CD4-positive, alpha-beta T cell (primary cell): ENCODE measurements at regions of chr9 and their contacts with region 1.

Region 1: GRCh38 chr9:98118640-98119601 is at the start of gene TRIM14:
- DNase-seq: peak in 12 of 14 experiments; percentile 28 to 74 (median 46)
- ATAC-seq: peak; percentile 38
- H3K4me3 ChIP-seq: peak within 1 kb of the TSS; percentile 89
- H3K4me3 Mint-ChIP-seq: peak within 1 kb of the TSS; percentile 90
- H3K27ac ChIP-seq: peak within 1 kb of the TSS; percentile 79 to 84
- H3K27ac Mint-ChIP-seq: peak within 1 kb of the TSS; percentile 95
- H3K4me1 ChIP-seq: peaks cover 66% of the 10 kb centered on the region
- H3K4me1 Mint-ChIP-seq: peaks cover 65% of the 10 kb centered on the region
- H3K27me3 ChIP-seq: no peaks in the 10 kb centered on the region
- H3K27me3 Mint-ChIP-seq: no peaks in the 10 kb centered on the region
- CTCF ChIP-seq: no peak
- total RNA-seq, gene TRIM14: 23.5 to 23.6 TPM

Region 2: DNA sequence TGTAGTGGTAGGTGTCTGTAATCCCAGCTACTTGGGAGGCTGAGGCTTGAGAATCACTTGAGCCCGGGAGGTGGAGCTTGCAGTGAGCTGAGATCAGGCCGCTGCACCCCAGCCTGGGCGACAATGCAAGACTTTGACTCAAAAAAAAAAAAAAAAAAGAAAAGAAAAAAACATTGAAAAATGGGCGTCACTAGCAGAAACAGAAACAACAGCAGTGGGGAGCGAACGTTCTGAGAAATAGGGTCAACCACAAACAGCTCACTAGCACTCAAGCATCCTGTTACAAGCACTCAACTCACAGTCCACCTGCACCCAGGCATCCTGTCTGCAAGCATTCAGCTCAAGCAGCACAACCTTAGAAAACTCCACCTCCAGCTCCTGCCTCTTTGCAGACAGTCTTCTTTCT is 17.1 kb before region 1 on chr9:
- CTCF ChIA-PET with region 1: interaction called, 26 read pairs
- POLR2A ChIA-PET with region 1: interaction called, 138 read pairs
- intact Hi-C with region 1: loop called (anchors 1 kb)
- DNase-seq: peak; percentile 63 to 96 (median 80)
- ATAC-seq: peak; percentile 94
- H3K4me3 ChIP-seq: peak overlapping the region; percentile 34
- H3K4me3 Mint-ChIP-seq: peak overlapping the region; percentile 71
- H3K27ac ChIP-seq: peak overlapping the region; percentile 74 to 79
- H3K27ac Mint-ChIP-seq: peak overlapping the region; percentile 91
- H3K4me1 ChIP-seq: peaks cover 95% of the 10 kb centered on the region
- H3K4me1 Mint-ChIP-seq: peaks cover 84% of the 10 kb centered on the region
- H3K27me3 ChIP-seq: no peaks in the 10 kb centered on the region
- H3K27me3 Mint-ChIP-seq: no peaks in the 10 kb centered on the region
- CTCF ChIP-seq: no peak

Region 3: DNA sequence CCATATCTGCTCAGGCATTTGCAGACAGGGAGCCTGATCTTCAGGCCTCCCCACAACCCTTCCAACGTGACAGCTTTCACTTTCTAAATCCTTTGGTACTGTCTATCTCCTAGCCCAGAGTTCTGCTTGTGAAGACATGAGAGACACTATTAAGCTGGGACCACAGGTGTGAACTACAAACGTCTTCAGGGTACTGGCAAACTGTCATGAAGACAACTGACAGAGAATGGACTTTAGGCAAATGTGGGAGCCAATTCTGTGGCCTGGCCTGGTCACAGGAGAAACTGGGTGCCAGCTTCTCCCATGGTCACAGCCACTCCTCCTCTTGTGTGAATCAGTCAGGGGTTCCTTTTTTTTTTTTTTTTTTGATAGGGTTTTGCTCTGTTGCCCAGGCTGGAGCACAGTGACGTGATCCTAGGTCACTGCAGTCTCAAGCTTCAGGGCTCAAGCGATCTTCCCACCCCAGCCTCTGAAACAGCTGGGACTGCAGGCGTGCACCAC is 10.3 kb before region 1 on chr9:
- CTCF ChIA-PET with region 1: interaction called, 26 read pairs
- POLR2A ChIA-PET with region 1: interaction called, 51 read pairs
- intact Hi-C with region 1: loop called (anchors 1 kb)
- DNase-seq: peak in 10 of 14 experiments; percentile 16 to 83 (median 24)
- ATAC-seq: peak; percentile 91
- H3K4me3 ChIP-seq: no peak overlapping the region
- H3K4me3 Mint-ChIP-seq: peak overlapping the region; percentile 42
- H3K27ac ChIP-seq: peak overlapping the region; percentile 75 to 79
- H3K27ac Mint-ChIP-seq: peak overlapping the region; percentile 91
- H3K4me1 ChIP-seq: peaks cover 69% of the 10 kb centered on the region
- H3K4me1 Mint-ChIP-seq: peaks cover 85% of the 10 kb centered on the region
- H3K27me3 ChIP-seq: no peaks in the 10 kb centered on the region
- H3K27me3 Mint-ChIP-seq: no peaks in the 10 kb centered on the region
- CTCF ChIP-seq: no peak

Region 4: DNA sequence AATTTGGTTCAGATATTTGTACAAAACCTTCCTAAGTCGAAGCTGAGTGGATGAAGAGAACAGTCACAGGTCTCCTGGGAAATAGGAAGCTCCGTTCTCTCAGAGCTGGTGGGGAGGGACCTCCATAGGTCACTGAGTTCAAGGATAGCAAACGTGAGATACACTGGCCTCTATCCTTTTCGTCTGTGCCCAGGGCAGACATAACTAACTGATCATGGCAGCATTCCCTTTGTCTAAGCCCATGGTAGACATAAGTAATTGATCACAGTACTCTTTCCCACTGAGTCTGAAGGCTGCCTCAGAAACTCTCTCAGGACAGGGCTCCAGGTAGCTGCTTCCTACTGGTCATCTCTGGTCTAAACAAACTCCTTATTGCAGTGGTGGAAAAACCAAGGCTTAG is 85.8 kb after region 1 on chr9:
- CTCF ChIA-PET with region 1: interaction called, 6 read pairs
- POLR2A ChIA-PET with region 1: no interaction called
- intact Hi-C with region 1: loop called in 1 of 2 experiments (anchors 2 kb)
- DNase-seq: no peak
- ATAC-seq: no peak
- H3K4me3 ChIP-seq: no peak overlapping the region
- H3K4me3 Mint-ChIP-seq: no peak overlapping the region
- H3K27ac ChIP-seq: no peak overlapping the region
- H3K27ac Mint-ChIP-seq: no peak overlapping the region
- H3K4me1 ChIP-seq: peaks cover 8% of the 10 kb centered on the region
- H3K4me1 Mint-ChIP-seq: peaks cover 6% of the 10 kb centered on the region
- H3K27me3 ChIP-seq: no peaks in the 10 kb centered on the region
- H3K27me3 Mint-ChIP-seq: no peaks in the 10 kb centered on the region
- CTCF ChIP-seq: no peak

Region 5: GRCh38 chr9:98263482-98264357 is 144.8 kb after region 1 on chr9:
- CTCF ChIA-PET with region 1: interaction called, 12 read pairs
- POLR2A ChIA-PET with region 1: no interaction called
- intact Hi-C with region 1: loop called (anchors 2 kb)
- DNase-seq: peak; percentile 73 to 90 (median 82)
- ATAC-seq: peak; percentile 100
- H3K4me3 ChIP-seq: no peak overlapping the region
- H3K4me3 Mint-ChIP-seq: no peak overlapping the region
- H3K27ac ChIP-seq: no peak overlapping the region
- H3K27ac Mint-ChIP-seq: no peak overlapping the region
- H3K4me1 ChIP-seq: no peaks in the 10 kb centered on the region
- H3K4me1 Mint-ChIP-seq: no peaks in the 10 kb centered on the region
- H3K27me3 ChIP-seq: no peaks in the 10 kb centered on the region
- H3K27me3 Mint-ChIP-seq: peaks cover 9% of the 10 kb centered on the region
- CTCF ChIP-seq: peak; percentile 97

Region 6: GRCh38 chr9:99076483-99077171 is 957.7 kb after region 1 on chr9:
- CTCF ChIA-PET with region 1: no interaction called
- POLR2A ChIA-PET with region 1: no interaction called
- intact Hi-C with region 1: no loop called
- DNase-seq: peak in 11 of 14 experiments; percentile 17 to 83 (median 44)
- ATAC-seq: peak; percentile 93
- H3K4me3 ChIP-seq: no peak overlapping the region
- H3K4me3 Mint-ChIP-seq: peak overlapping the region; percentile 42
- H3K27ac ChIP-seq: peak overlapping the region in 1 of 2 donors; percentile 64
- H3K27ac Mint-ChIP-seq: peak overlapping the region; percentile 68
- H3K4me1 ChIP-seq: peaks cover 37% of the 10 kb centered on the region
- H3K4me1 Mint-ChIP-seq: peaks cover 61% of the 10 kb centered on the region
- H3K27me3 ChIP-seq: no peaks in the 10 kb centered on the region
- H3K27me3 Mint-ChIP-seq: no peaks in the 10 kb centered on the region
- CTCF ChIP-seq: no peak